ENCODE measurements at regions of chr2 and their contacts with region 1.

Region 1: GRCh38 chr2:200899482-200899881 is 10.3 kb downstream of the NIF3L1 start:
- DNase-seq: no peak
- H3K4me3 ChIP-seq: no peak overlapping the region
- H3K27ac ChIP-seq: no peak overlapping the region
- H3K4me1 ChIP-seq: peaks cover 0 to 10% (median 4%) of the 10 kb centered on the region in 6 donors
- H3K27me3 ChIP-seq: no peaks in the 10 kb centered on the region
- CTCF ChIP-seq: no peak
- POLR2A ChIP-seq: no peak

Region 2: GRCh38 chr2:200104015-200104414 is 795.5 kb before region 1 on chr2:
- intact Hi-C with region 1: no loop called
- DNase-seq: no peak
- H3K4me3 ChIP-seq: no peak overlapping the region
- H3K27ac ChIP-seq: no peak overlapping the region
- H3K4me1 ChIP-seq: no peaks in the 10 kb centered on the region
- H3K27me3 ChIP-seq: no peaks in the 10 kb centered on the region
- CTCF ChIP-seq: no peak
- POLR2A ChIP-seq: no peak

Region 3: DNA sequence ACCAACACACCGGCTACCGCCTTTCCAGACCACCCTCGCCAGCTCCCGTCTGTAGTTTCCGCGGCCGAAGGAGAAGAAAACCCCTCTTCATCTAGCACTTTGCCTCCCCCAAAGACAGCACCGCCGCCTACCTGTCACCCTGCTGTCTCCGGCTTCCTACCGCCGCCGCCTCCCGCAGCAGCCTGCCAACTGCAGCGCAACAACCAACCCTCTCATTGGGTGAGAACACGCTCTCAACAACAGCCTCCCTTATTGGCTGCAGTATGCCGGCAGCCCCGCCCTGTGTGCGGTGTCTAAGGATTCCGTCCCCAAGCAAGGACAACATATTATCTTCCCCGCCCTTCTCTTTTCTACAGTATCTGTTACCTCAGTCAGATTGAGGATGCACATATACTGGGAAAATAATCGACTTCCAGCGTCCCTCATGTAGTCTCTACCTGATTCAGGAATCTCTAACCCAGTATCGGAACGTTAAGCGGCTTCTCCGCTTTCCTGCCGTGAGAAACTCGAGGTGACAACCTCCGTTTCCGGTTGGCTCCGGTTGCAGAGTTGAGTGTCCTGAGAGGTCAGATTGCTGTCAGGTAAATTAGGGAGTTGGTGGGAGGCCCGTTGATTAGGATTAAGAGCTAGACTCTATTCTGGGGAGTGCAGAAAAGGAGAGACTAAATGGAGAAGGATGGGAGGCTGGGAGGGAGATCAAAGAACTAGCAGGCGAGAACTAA is 172.2 kb after region 1 on chr2 and contains the starts of genes HYCC2 and NDUFB3:
- intact Hi-C with region 1: loop called (anchors 10 kb)
- DNase-seq: peak; percentile 95
- H3K4me3 ChIP-seq: peak within 1 kb of the TSS; percentile 67 to 92 (median 82)
- H3K27ac ChIP-seq: peak within 1 kb of the TSS; percentile 89 to 95 (median 92)
- H3K4me1 ChIP-seq: peaks cover 39 to 89% (median 68%) of the 10 kb centered on the region in 6 donors
- H3K27me3 ChIP-seq: no peaks in the 10 kb centered on the region
- CTCF ChIP-seq: peak; percentile 33 to 74 (median 50)
- POLR2A ChIP-seq: peak in 2 of 3 donors; percentile 20 to 63
- total RNA-seq, gene HYCC2: 38.8 to 68.9 (median 45.0) TPM
- total RNA-seq, gene NDUFB3: 30.0 to 91.5 (median 58.3) TPM

Measured in spleen (tissue), 13 donors.